Cardiac septum (tissue), 1 donor: ENCODE measurements at regions of chr1 and their contacts with region 1.

Region 1: DNA sequence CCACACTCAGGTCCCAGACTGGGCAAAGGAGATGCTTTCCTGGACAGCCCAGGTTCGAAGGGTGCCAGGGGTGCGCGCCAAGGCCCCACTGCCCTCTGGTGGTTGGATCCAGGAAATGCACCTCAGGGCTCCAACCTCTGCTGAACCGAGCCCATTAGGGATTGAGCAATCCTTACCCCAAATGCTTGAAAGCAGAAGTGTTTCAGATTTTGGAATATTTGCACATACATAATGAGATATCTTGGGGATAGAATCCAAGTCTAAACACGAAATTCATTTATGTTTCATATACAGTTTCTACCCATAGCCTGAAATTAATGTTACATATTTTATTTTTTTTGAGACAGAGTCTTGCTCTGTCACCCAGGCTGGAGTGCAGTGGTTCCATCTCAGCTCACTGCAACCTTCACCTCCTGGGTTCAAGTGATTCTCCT is 57.4 kb downstream of the SLC9A1 start:
- DNase-seq: peak; percentile 93

Region 2: GRCh38 chr1:26602378-26602959 is 495.0 kb before region 1 on chr1:
- intact Hi-C with region 1: no loop called
- DNase-seq: no peak

Region 3: GRCh38 chr1:26959722-26960615 is 137.5 kb before region 1 on chr1 and contains the start of gene KDF1:
- intact Hi-C with region 1: loop called (anchors 10 kb)
- DNase-seq: no peak
- total RNA-seq, gene KDF1: not detected

Region 4: DNA sequence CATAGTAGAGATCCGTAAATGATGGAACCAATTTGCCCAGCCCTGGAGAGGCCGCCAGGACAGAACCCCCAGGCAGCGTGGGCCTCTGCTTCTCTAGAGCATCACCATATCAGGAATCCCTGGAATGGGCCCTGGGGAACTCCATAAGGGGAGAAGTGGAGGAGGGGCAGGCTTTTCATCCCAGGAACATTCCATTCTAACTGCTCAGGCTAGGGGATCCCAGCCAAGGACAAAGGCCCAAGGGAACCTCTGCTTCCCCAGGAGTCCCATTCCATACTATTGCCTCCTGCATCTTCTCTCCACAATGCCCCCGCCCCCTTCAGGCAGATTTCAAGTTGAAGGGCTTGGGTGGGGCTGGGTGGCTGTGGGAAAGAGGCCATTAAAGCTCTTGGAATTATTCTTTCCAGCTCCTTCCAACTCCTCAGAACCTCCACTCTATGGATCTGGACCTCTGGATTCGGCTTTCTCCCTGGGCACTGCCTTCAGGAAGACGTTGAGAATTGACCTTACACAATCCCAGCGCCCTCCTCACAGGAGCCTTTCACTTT is 98.0 kb before region 1 on chr1:
- intact Hi-C with region 1: loop called (anchors 1 kb)
- DNase-seq: no peak

Region 5: DNA sequence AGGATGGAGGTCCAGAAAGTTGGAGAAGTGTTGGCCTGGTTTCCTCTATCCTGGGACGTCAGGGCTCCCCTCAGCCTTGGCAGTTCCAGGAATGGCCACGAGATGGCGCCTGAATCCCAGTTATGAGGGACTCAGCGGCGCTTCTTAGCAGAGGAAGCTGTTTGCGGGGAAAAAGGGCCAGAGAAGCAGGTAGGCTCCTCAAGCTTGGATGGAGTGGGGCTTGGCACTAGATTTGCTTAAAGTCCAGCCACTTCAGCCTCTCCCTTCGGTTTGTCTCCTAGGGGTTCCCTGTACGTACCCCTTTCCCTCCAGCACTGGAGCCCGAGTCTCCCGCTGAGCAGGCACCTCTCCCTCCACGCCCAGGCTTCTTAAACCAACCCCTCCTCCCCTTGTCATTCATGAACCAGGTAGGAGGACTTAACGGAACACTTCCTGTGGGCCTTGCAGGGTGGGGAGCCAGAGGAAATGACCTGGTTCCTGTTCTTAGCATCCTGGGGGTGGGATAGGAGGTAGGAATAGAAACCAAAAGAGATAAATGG is 52.8 kb before region 1 on chr1:
- intact Hi-C with region 1: loop called (anchors 1 kb)
- DNase-seq: peak; percentile 95